Left cardiac atrium (tissue), 4 donors: ENCODE measurements at regions of chr1 and their contacts with region 1.

Region 1: GRCh38 chr1:158087320-158087927 is 93.3 kb upstream of the CD1D start:
- DNase-seq: peak; percentile 64
- ATAC-seq: peak; percentile 35 to 65

Region 2: GRCh38 chr1:158035976-158036583 is 51.3 kb before region 1 on chr1:
- intact Hi-C with region 1: loop called in 1 of 2 experiments (anchors 10 kb)
- DNase-seq: peak; percentile 54
- ATAC-seq: peak; percentile 28 to 52

Region 3: GRCh38 chr1:158163000-158163947 is 75.8 kb after region 1 on chr1:
- intact Hi-C with region 1: no loop called
- DNase-seq: no peak
- ATAC-seq: no peak